WTC11 (cell line): ENCODE measurements at regions of chr11 and their contacts with region 1.

Region 1: DNA sequence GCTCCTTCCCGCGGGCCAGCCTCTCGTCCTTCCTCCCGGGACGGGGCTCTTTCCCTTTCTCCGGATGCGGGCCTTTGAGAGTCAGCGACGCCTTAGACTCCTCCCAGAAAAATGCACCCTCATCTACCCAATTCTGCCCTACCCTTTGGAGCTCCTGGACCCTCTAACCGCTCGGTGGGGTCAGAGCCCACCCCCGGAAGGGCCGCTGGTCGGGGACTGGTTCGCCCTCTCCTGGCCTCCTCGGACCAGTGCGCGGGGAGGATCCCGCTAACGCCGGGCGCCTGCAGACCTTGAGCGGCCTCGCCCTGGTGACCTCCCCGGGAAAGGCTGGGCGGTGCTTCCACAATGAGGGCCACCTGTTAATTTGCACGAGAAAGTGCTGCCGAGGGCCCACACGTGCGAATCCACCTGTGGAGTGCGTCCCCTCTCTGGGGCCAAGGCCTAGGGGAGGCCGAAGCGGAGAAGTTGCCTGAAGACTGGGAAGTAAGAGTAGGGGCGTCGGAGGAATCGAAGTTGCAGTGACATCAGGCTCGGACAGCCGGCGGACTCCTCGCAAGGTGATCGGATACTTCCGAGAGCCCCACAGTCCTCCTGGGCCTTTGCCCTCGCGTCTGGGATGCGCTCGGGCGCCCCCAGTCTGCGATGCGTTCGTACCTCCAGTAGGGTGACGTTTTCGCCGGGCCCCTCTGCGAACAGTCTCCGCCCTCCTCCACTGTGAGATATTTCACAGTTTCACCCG is 61.5 kb downstream of the ENDOD1 start:
- DNase-seq: peak; percentile 96
- ATAC-seq: peak; percentile 93
- H3K4me3 Mint-ChIP-seq: peak overlapping the region; percentile 81
- H3K27ac Mint-ChIP-seq: peak overlapping the region; percentile 94
- H3K4me1 Mint-ChIP-seq: peaks cover 14% of the 10 kb centered on the region
- H3K27me3 Mint-ChIP-seq: peaks cover 51% of the 10 kb centered on the region
- CTCF ChIP-seq: no peak

Region 2: DNA sequence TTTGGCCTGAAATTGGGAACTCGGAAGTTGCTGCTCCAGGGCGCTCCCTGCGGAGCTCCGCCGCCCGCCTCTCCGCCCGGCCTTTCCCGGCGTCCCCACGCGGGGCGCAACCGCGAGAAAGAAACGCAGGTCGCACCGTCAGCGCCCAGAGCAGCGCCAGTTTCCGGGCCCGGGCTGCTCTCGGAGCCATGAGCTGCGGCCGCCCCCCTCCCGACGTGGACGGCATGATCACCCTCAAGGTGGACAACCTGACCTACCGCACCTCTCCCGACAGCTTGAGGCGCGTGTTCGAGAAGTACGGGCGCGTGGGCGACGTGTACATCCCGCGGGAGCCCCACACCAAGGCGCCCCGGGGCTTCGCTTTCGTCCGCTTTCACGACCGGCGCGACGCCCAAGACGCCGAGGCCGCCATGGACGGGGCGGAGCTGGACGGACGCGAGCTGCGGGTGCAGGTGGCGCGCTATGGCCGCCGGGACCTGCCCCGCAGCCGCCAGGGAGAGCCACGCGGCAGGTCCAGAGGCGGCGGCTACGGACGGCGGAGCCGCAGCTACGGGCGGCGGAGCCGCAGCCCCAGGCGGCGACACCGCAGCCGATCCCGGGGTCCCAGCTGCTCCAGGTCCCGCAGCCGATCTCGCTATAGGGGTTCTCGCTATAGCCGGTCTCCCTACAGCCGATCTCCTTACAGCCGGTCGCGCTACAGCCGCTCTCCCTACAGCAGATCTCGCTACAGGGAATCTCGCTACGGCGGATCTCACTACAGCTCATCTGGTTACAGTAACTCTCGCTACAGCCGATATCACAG is 83.9 kb before region 1 on chr11:
- CTCF ChIA-PET with region 1: interaction called, 89 read pairs
- POLR2A ChIA-PET with region 1: interaction called, 8 read pairs
- DNase-seq: peak; percentile 79
- ATAC-seq: peak; percentile 78
- H3K4me3 Mint-ChIP-seq: peak overlapping the region; percentile 86
- H3K27ac Mint-ChIP-seq: peak overlapping the region; percentile 80
- H3K4me1 Mint-ChIP-seq: peaks cover 17% of the 10 kb centered on the region
- H3K27me3 Mint-ChIP-seq: no peaks in the 10 kb centered on the region; the same call in 1 of the 2 replicates
- CTCF ChIP-seq: no peak

Region 3: GRCh38 chr11:95231127-95231880 is 80.2 kb after region 1 on chr11 and contains the start of gene SESN3:
- CTCF ChIA-PET with region 1: interaction called, 33 read pairs
- POLR2A ChIA-PET with region 1: interaction called, 5 read pairs
- DNase-seq: peak; percentile 99
- ATAC-seq: peak; percentile 94
- H3K4me3 Mint-ChIP-seq: peak within 1 kb of the TSS; percentile 97
- H3K27ac Mint-ChIP-seq: peak within 1 kb of the TSS; percentile 43
- H3K4me1 Mint-ChIP-seq: peaks cover 51% of the 10 kb centered on the region
- H3K27me3 Mint-ChIP-seq: peaks cover 30% of the 10 kb centered on the region
- CTCF ChIP-seq: no peak
- total RNA-seq, gene SESN3: 34.9 to 38.2 TPM (median 35.1 TPM) in 3 replicates

Region 4: GRCh38 chr11:95455228-95455970 is 304.3 kb after region 1 on chr11:
- CTCF ChIA-PET with region 1: interaction called, 10 read pairs
- POLR2A ChIA-PET with region 1: interaction called, 4 read pairs
- DNase-seq: no peak
- ATAC-seq: no peak
- H3K4me3 Mint-ChIP-seq: no peak overlapping the region
- H3K27ac Mint-ChIP-seq: no peak overlapping the region
- H3K4me1 Mint-ChIP-seq: peaks cover 11% of the 10 kb centered on the region
- H3K27me3 Mint-ChIP-seq: no peaks in the 10 kb centered on the region
- CTCF ChIP-seq: no peak

Region 5: DNA sequence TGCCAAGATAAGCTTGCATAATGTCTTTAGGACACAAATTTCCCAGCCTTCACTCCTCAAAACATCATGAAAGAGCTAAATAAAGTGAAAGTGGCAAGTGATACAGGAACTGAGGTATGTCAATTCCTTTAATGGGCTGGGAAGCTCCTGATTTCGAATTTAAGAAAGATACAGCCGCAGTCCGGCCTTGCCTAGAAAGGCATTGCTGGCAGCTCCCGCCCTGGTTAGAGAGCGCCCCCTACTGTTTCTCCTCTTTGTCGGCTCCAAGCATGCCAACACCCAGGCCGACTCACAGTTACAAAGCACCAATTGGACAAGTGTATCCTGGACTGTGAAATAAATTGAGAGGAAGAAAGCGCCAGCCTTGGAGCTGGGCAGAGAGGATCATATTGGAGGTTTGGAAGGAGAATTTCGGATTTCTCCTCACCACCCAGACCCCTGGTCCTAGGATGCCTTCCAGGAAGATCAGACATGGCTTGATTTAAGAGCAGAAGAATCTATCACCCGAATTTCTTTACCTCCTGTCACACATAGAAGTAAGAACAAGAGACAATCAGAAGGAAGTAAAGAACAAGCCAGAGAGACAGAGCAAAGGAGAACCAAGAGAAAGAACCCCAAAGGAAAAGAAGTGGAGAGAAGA is 554.5 kb after region 1 on chr11:
- CTCF ChIA-PET with region 1: interaction called, 143 read pairs
- POLR2A ChIA-PET with region 1: no interaction called
- DNase-seq: peak; percentile 87
- ATAC-seq: peak; percentile 99
- H3K4me3 Mint-ChIP-seq: no peak overlapping the region
- H3K27ac Mint-ChIP-seq: no peak overlapping the region
- H3K4me1 Mint-ChIP-seq: no peaks in the 10 kb centered on the region
- H3K27me3 Mint-ChIP-seq: peaks cover 2% of the 10 kb centered on the region; the same call in 1 of the 2 replicates
- CTCF ChIP-seq: peak; percentile 91

Region 6: DNA sequence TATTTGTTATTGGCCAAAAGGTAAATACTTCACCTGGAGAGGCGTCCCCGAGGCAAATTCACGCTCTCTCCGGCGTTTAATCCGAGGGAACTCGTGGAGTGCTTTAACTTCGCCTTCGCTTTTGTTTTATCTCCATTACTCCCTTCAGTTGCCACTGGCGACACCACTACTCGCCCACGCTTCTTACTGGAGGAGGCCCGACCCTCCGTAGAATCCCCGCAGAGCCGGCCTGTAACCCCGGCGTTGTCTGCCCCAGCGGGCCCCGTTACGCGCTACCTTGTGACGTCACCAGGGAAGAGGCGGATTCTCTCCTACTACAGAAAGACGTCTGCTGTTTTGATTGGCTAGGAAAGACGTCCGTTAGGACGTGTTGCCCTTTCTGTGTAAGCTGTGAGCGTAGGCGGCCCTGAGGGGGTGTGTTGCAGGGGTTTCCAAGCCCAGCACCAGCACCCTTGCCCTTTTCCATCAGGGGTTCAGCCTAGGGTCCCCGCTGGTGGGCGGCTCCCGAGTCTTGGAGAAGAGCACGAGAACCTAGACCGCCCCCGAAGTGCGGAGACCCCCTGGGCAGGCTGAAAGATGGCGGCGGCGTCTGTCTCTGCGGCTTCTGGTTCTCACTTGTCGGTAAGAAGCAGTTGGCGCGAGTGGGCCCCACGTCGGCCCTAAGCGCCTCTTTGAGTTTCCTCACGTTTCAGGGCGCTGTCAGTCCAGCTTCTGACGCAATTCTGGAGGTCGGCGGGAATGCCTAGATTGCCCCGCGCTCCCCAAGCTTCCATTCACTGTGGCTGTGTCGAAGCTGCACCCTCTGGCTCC is 639.2 kb after region 1 on chr11 and contains the start of gene CEP57:
- CTCF ChIA-PET with region 1: interaction called, 10 read pairs
- POLR2A ChIA-PET with region 1: interaction called, 5 read pairs
- DNase-seq: peak; percentile 94
- ATAC-seq: peak; percentile 65
- H3K4me3 Mint-ChIP-seq: peak within 1 kb of the TSS; percentile 99
- H3K27ac Mint-ChIP-seq: peak within 1 kb of the TSS; percentile 100
- H3K4me1 Mint-ChIP-seq: peaks cover 34% of the 10 kb centered on the region
- H3K27me3 Mint-ChIP-seq: no peaks in the 10 kb centered on the region
- CTCF ChIP-seq: no peak
- total RNA-seq, gene CEP57: 67.6 to 70.7 TPM (median 70.2 TPM) in 3 replicates